Activated naive CD4-positive, alpha-beta T cell treated with anti-CD3 and anti-CD28 coated beads for 36 hours (primary cell): ENCODE measurements at regions of chr9 and their contacts with region 1.

Region 1: DNA sequence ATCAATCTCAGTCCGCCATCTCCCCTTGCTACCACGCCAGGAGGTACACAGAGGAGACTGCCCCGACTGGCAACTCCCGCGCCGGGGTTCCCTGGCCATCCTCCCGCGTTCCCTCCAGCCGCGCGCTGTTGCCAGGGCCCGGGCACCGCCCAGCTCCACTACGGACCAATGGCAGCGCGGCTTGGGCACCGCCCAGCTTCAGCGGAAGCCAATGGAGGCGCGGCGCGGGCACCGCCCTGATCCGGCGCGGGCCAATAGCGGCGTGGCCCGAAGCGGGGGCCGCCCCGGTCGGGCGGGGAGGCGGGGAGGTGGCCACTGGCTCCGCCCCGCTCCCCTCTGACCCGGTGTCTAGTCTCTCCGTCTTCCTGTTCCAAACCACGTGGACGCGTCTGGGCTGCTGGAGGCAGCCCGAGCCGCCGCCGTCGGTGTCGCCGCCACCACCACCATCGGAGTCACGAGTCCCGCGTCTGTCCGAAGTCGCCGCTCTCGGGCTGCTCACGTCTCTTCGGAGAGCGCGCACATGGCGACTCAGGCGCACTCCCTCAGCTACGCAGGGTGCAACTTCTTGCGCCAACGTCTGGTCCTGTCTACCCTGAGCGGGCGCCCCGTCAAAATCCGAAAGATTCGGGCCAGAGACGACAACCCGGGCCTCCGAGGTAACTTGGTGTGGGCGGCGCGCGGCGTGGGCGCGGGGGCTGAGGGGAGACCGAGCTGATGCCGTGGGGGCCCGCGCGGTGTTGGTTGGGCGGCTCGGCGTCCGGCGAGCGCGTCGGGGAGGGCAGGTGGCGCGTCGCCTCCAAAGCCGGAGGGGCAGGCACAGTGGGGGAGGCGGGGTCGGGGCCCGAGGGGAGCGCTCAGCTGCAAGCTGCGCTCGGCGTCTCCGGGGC is at the start of gene RCL1:
- DNase-seq: peak; percentile 97
- H3K4me3 Mint-ChIP-seq: peak within 1 kb of the TSS; percentile 96
- H3K27ac Mint-ChIP-seq: peak within 1 kb of the TSS; percentile 84
- H3K4me1 Mint-ChIP-seq: peaks cover 49% of the 10 kb centered on the region
- H3K27me3 Mint-ChIP-seq: no peaks in the 10 kb centered on the region
- total RNA-seq, gene RCL1: 26.9 to 30.7 TPM

Region 2: DNA sequence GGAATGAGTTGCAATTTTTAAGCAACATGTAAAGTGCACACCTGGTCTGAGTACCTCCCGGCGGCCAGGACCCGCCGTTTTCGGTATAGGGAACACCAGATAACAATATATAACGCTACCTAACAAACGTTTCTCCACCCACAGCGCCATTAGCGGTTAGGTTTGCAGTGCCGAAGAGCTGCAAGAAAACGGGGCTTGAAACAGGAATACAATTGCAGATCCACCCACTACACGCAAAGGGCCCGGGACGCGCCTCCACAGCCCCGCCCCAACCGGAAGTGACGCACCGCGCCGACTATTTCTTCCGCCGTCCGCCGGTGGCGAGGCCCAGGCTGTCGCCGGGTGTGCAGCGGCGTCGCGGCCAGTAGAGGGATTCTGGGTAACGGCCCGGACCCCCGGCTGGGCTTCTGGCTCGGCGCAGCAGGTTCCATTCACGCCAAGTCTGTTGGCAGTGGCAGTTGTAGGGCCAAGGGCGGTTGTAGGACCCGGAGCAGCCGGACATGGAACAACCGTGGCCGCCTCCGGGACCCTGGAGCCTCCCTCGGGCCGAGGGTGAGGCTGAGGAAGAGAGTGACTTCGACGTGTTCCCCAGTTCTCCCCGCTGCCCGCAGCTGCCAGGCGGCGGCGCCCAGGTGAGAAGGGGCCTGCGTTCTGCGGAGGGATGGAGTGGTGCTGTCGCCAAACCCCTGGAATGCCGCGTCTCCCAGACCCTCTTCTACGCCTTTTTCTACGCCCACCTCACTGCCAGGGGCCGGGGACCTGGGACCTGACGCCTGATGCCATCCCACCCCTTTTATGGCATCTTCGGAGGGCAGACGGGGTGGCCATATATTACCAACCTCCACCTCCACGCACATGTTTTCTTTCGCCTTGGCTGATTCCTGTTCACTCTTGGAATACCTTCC is 113.3 kb before region 1 on chr9 and contains the start of gene CDC37L1:
- CTCF ChIA-PET with region 1: interaction called, 4 read pairs
- intact Hi-C with region 1: loop called (anchors 1 kb)
- DNase-seq: peak; percentile 99
- H3K4me3 Mint-ChIP-seq: no peak within 1 kb of the TSS
- H3K27ac Mint-ChIP-seq: no peak within 1 kb of the TSS
- H3K4me1 Mint-ChIP-seq: peaks cover 17% of the 10 kb centered on the region
- H3K27me3 Mint-ChIP-seq: no peaks in the 10 kb centered on the region
- total RNA-seq, gene CDC37L1: 13.7 to 14.5 TPM

Region 3: DNA sequence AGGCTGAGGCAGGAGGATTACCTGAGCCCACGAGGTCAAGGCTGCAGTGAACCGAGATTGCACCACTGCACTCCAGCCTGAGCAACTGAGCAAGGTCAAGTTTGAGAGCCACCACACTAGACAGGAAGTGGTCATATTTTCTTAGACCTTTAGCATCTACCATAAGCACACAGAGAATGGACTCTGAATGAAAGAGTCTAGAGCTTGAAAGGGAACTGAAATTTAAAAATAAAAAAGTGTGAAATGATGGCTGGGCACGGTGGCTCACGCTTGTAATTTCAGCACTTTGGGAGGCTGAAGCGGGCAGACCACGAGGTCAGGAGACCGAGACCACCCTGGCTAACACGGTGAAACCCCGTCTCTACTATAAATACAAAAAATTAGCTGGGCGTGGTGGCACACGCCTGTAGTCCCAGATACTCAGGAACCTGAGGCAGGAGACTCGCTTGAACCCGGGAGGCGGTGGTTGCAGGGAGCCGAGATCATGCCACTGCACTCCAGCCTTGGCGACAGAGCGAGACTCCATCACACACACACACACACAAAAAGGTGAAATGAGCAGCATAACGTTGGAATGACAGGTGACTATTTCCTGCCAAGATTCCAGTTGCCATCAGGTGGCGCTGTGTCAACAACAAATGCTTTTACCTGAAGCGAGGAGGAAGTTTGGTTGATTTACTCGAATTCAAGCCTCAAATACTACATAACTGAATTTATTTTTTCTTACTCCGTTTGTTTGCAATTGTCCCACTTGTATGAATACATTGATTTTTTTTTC is 30.5 kb before region 1 on chr9:
- CTCF ChIA-PET with region 1: interaction called, 13 read pairs
- intact Hi-C with region 1: loop called (anchors 1 kb)
- DNase-seq: peak; percentile 94
- H3K4me3 Mint-ChIP-seq: peak overlapping the region; percentile 49
- H3K27ac Mint-ChIP-seq: peak overlapping the region; percentile 81
- H3K4me1 Mint-ChIP-seq: peaks cover 22% of the 10 kb centered on the region
- H3K27me3 Mint-ChIP-seq: peaks cover 7% of the 10 kb centered on the region

Region 4: GRCh38 chr9:4832786-4833579 is 40.2 kb after region 1 on chr9:
- CTCF ChIA-PET with region 1: interaction called, 3 read pairs
- intact Hi-C with region 1: loop called (anchors 2 kb)
- DNase-seq: peak; percentile 80
- H3K4me3 Mint-ChIP-seq: no peak overlapping the region
- H3K27ac Mint-ChIP-seq: peak overlapping the region; percentile 85
- H3K4me1 Mint-ChIP-seq: peaks cover 46% of the 10 kb centered on the region
- H3K27me3 Mint-ChIP-seq: no peaks in the 10 kb centered on the region

Region 5: GRCh38 chr9:4939118-4939561 is 146.3 kb after region 1 on chr9:
- CTCF ChIA-PET with region 1: interaction called, 3 read pairs
- intact Hi-C with region 1: loop called (anchors 1 kb)
- DNase-seq: no peak
- H3K4me3 Mint-ChIP-seq: no peak overlapping the region
- H3K27ac Mint-ChIP-seq: peak overlapping the region; percentile 88
- H3K4me1 Mint-ChIP-seq: peaks cover 79% of the 10 kb centered on the region
- H3K27me3 Mint-ChIP-seq: no peaks in the 10 kb centered on the region

Region 6: GRCh38 chr9:5364294-5365024 is 571.6 kb after region 1 on chr9:
- CTCF ChIA-PET with region 1: no interaction called
- intact Hi-C with region 1: loop called (anchors 1 kb)
- DNase-seq: peak; percentile 22
- H3K4me3 Mint-ChIP-seq: no peak overlapping the region
- H3K27ac Mint-ChIP-seq: peak overlapping the region; percentile 35
- H3K4me1 Mint-ChIP-seq: peaks cover 25% of the 10 kb centered on the region
- H3K27me3 Mint-ChIP-seq: no peaks in the 10 kb centered on the region